Right ventricle myocardium inferior (tissue), 1 donor: ENCODE measurements at regions of chr2 and their contacts with region 1.

Region 1: DNA sequence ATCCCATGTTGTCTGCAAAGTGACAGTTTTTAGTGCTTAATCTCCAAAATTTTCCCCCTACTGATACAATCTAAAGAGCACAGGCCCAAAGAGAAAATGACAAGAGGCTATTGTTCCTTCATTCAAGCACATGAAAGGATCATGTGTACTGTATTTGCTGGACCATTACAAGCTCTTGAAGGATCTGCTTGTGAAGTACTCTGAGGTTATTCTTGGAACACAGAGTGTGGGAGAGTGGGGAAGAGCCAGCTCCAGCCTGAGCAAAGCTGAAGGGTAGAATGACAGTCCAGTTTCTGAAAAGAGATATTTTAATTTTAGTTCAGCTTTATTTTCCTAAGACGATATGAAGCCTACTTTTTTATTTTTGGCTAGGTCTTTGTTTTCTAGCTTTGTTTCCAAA is 112.2 kb downstream of the GALNT3 start:
- DNase-seq: no peak
- ATAC-seq: peak; percentile 98

Region 2: DNA sequence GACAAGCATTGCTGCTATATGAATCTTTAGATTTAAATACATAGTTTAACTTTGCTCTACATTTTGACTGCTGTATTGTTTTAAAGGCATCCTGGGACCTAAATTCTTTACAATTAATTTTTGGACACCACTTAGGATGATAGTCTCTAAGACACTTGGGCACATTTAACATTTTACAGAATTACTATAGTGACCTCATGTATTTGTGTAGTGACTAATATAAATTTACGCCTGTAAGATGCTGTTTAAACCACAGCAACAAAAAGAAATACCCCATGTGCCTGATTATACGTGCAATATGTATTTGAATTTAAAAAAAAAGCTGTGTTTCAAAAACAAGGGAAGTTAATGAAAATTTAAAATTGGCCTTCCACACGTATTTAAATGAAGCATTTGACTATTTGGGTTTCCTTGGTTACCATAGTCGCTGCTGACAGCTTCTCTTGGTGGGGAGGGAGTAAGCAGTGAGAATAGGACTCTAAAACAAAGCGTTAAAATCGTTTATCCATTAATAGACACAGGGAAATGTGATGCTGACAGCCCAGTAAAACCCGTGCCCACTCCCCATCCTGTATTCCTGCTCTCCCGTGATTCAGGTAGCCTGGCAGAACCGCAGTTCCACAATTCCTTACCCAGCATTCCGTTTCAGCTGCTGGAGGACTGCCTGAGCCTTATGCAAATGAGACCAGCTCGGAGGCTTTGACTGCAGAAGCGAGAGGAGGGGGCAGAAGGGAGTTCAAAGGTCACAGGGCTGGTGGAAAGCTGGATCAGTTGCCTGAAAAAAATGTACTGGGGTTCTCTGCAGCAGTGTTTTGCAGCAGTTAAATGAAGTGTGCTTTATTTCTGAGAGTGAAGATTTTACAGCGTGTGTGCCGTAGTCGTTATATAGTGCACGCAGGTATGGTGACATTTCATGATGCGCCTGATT is 108.0 kb before region 1 on chr2:
- intact Hi-C with region 1: loop called (anchors 10 kb)
- DNase-seq: no peak
- ATAC-seq: peak; percentile 84

Region 3: GRCh38 chr2:165787334-165787733 is 105.5 kb after region 1 on chr2:
- intact Hi-C with region 1: no loop called
- DNase-seq: no peak
- ATAC-seq: no peak